Caco-2 (cell line): ENCODE measurements at regions of chr6 and their contacts with region 1.

Region 1: GRCh38 chr6:121430514-121431460 is 4.7 kb upstream of the GJA1 start:
- DNase-seq: peak in 1 of 2 experiments; percentile 47
- H3K4me3 ChIP-seq: no peak overlapping the region
- H3K4me3 Mint-ChIP-seq: peak overlapping the region; percentile 9
- H3K27ac Mint-ChIP-seq: no peak overlapping the region
- H3K4me1 ChIP-seq: peaks cover 18% of the 10 kb centered on the region
- H3K4me1 Mint-ChIP-seq: peaks cover 7% of the 10 kb centered on the region
- H3K27me3 ChIP-seq: no peaks in the 10 kb centered on the region
- H3K27me3 Mint-ChIP-seq: no peaks in the 10 kb centered on the region
- CTCF ChIP-seq: peak; percentile 47 to 69

Region 2: GRCh38 chr6:121482004-121482693 is 51.4 kb after region 1 on chr6:
- CTCF ChIA-PET with region 1: no interaction called
- POLR2A ChIA-PET with region 1: no interaction called
- intact Hi-C with region 1: no loop called
- DNase-seq: no peak
- H3K4me3 ChIP-seq: no peak overlapping the region
- H3K4me3 Mint-ChIP-seq: no peak overlapping the region
- H3K27ac Mint-ChIP-seq: no peak overlapping the region
- H3K4me1 ChIP-seq: peaks cover 10% of the 10 kb centered on the region
- H3K4me1 Mint-ChIP-seq: peaks cover 6% of the 10 kb centered on the region
- H3K27me3 ChIP-seq: no peaks in the 10 kb centered on the region
- H3K27me3 Mint-ChIP-seq: no peaks in the 10 kb centered on the region
- CTCF ChIP-seq: no peak

Region 3: DNA sequence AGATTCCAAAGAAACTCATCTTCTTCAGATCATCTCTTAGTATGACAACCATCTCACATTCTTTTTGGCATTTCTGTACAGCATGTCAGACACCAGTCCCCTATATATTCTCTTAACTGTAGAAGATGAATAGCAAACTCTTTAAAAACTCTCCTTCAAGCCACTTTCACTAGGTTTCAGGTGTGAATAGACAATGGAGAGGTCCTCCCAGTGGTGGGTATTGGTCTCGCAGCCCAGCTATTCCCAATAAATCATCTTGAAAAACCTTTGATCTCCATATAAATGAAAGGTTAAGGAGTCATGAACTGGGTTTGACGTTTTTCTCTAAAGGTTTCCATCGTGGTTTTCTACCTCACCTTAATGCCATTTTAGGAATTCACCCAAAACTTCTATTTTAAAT is 184.7 kb after region 1 on chr6:
- CTCF ChIA-PET with region 1: no interaction called
- POLR2A ChIA-PET with region 1: no interaction called
- intact Hi-C with region 1: loop called (anchors 1 kb)
- DNase-seq: peak in 1 of 2 experiments; percentile 12
- H3K4me3 ChIP-seq: no peak overlapping the region
- H3K4me3 Mint-ChIP-seq: no peak overlapping the region
- H3K27ac Mint-ChIP-seq: no peak overlapping the region
- H3K4me1 ChIP-seq: 0 out of 2 replicates have a peak, but pooled peaks cover 3% of the 10 kb centered on the region
- H3K4me1 Mint-ChIP-seq: no peaks in the 10 kb centered on the region
- H3K27me3 ChIP-seq: no peaks in the 10 kb centered on the region; the same call in 1 of the 2 replicates
- H3K27me3 Mint-ChIP-seq: no peaks in the 10 kb centered on the region
- CTCF ChIP-seq: peak; percentile 29 to 37

Region 4: DNA sequence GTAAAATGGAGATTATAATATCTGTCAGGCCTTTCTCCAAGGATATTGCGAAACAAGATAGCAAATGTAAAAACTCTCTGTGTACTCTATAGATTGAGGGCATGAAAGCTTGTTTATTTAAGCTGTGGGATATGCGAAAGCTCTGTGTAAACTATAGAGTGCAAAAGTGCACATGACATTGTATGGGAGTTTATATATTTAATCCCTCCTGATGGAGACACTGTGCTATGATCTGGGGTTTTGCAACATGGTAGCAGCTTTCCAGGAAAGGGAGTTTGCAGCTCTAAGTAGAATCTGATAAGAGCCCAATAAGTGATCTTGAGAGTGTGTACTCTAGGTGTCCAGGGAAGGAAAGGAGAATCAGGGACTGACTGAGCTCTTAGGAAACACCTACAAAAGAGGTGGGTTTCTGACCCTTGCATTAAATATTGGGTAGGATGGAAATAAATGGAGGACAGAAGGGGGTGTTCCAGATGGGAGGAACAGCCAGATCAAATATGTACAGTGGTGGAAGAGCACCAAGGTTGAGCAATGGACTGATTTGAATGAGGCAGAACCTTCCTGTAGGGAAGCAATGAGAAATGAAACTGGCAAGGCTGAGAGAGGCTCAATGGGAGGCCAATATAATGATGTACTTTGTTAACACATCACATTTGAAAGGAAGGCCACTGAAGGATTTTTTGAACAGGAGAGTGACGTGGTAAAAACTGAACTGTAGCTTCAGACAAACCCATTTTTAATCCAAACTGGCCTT is 454.8 kb after region 1 on chr6:
- CTCF ChIA-PET with region 1: no interaction called
- POLR2A ChIA-PET with region 1: no interaction called
- intact Hi-C with region 1: loop called (anchors 2 kb)
- DNase-seq: peak; percentile 68 to 76
- H3K4me3 ChIP-seq: no peak overlapping the region
- H3K4me3 Mint-ChIP-seq: peak overlapping the region; percentile 21
- H3K27ac Mint-ChIP-seq: no peak overlapping the region
- H3K4me1 ChIP-seq: peaks cover 25% of the 10 kb centered on the region
- H3K4me1 Mint-ChIP-seq: peaks cover 13% of the 10 kb centered on the region
- H3K27me3 ChIP-seq: no peaks in the 10 kb centered on the region; the same call in 1 of the 2 replicates
- H3K27me3 Mint-ChIP-seq: no peaks in the 10 kb centered on the region
- CTCF ChIP-seq: no peak

Region 5: DNA sequence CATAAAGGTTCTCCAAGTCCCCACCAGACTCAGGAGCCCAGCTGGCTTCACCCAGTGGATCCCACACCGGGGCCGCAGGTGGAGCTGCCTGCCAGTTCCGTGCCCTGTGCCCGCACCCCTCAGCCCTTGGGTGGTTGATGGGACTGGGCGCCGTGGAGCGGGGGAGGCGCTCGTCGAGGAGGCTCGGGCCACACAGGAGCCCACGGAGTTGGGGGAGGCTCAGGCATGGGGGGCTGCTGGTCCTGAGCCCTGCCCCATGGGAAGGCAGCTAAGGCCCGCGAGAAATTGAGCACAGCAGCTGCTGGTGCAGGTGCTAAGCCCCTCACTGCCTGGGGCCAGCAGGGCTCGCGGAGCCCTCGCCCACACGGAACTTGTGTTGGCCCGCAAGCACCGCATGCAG is 734.2 kb after region 1 on chr6:
- CTCF ChIA-PET with region 1: no interaction called
- POLR2A ChIA-PET with region 1: no interaction called
- intact Hi-C with region 1: no loop called
- DNase-seq: no peak
- H3K4me3 ChIP-seq: no peak overlapping the region
- H3K4me3 Mint-ChIP-seq: no peak overlapping the region
- H3K27ac Mint-ChIP-seq: no peak overlapping the region
- H3K4me1 ChIP-seq: no peaks in the 10 kb centered on the region
- H3K4me1 Mint-ChIP-seq: no peaks in the 10 kb centered on the region
- H3K27me3 ChIP-seq: no peaks in the 10 kb centered on the region
- H3K27me3 Mint-ChIP-seq: no peaks in the 10 kb centered on the region
- CTCF ChIP-seq: no peak

Region 6: GRCh38 chr6:122184401-122184827 is 753.6 kb after region 1 on chr6:
- CTCF ChIA-PET with region 1: no interaction called
- POLR2A ChIA-PET with region 1: no interaction called
- intact Hi-C with region 1: loop called (anchors 1 kb)
- DNase-seq: peak in 1 of 2 experiments; percentile 6
- H3K4me3 ChIP-seq: no peak overlapping the region
- H3K4me3 Mint-ChIP-seq: no peak overlapping the region
- H3K27ac Mint-ChIP-seq: no peak overlapping the region
- H3K4me1 ChIP-seq: no peaks in the 10 kb centered on the region
- H3K4me1 Mint-ChIP-seq: no peaks in the 10 kb centered on the region
- H3K27me3 ChIP-seq: no peaks in the 10 kb centered on the region
- H3K27me3 Mint-ChIP-seq: peaks cover 7% of the 10 kb centered on the region
- CTCF ChIP-seq: peak in 1 of 2 experiments; percentile 26